Cardiac septum (tissue), 1 donor: ENCODE measurements at regions of chr12 and their contacts with region 1.

Region 1: GRCh38 chr12:46933947-46934346 is 108.2 kb upstream of the SLC38A4 start:
- DNase-seq: no peak

Region 2: GRCh38 chr12:46342562-46343033 is 591.3 kb before region 1 on chr12:
- intact Hi-C with region 1: loop called (anchors 5 kb)
- DNase-seq: no peak

Region 3: DNA sequence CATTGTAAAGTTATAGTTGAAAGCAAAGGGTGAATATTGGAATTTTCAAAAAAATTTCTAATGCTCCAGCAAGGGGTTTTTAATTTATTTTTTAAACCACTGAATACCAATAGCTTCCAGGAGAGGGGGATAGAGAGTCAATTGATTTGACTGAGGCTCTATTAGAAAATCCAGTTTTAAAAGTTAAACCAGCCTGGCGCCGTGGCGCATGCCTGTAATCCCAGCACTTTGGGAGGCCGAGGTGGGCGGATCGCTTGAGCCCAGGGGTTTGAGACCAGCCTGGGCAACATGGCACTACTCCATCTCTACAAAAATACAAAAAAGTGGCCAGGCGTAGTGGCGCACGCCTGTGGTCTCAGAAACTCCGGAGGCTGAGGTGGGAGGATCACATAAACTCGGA is 258.2 kb before region 1 on chr12:
- intact Hi-C with region 1: loop called (anchors 5 kb)
- DNase-seq: no peak

Region 4: GRCh38 chr12:46811185-46811584 is 122.8 kb before region 1 on chr12:
- intact Hi-C with region 1: no loop called
- DNase-seq: no peak

Region 5: GRCh38 chr12:46983393-46984266 is 49.7 kb after region 1 on chr12:
- intact Hi-C with region 1: no loop called
- DNase-seq: no peak